ENCODE measurements at regions of chr10 and their contacts with region 1.

Region 1: DNA sequence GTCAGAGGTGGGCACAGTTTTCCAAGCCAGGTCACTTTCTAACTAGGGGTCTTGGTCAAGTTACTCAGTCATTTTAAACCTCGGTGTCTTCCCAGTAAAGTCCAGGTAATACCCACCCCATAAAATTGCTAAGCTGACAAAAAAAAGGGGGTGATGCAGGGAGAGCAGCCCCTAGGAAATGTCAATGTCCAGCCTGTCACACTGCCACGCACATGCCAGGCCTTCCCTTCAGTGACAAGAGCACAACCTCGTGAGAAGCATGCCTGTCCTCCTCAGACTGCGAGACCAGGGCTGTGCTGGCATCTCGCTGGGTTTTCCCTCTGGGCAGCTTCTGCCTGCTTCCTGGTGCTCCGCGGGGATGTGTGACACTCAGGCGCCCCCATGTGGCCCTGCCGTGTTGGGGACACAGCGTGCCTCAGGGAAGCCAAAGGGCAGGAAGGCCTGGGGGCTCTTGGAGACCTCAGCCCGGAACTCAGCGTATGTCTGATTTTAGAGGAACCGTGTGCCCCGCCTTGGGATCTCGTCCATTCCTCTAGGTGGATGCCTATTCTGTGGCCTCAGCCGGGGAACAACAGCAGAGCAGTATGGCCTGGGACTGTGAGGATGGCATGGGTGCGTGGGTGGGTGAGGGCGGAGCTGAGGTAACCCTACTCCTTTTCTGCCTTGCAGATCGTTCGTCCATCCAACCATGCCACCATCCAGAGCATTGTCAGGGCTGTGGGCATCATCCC is 10.2 kb upstream of the GDF2 start:
- DNase-seq: peak; percentile 91
- H3K4me3 Mint-ChIP-seq: no peak overlapping the region
- H3K27ac Mint-ChIP-seq: peak overlapping the region; percentile 51
- H3K4me1 Mint-ChIP-seq: peaks cover 22% of the 10 kb centered on the region
- H3K27me3 Mint-ChIP-seq: no peaks in the 10 kb centered on the region

Region 2: GRCh38 chr10:47040041-47040491 is 272.0 kb before region 1 on chr10:
- CTCF ChIA-PET with region 1: interaction called, 369 read pairs
- POLR2A ChIA-PET with region 1: no interaction called
- intact Hi-C with region 1: no loop called
- DNase-seq: no peak
- H3K4me3 Mint-ChIP-seq: no peak overlapping the region
- H3K27ac Mint-ChIP-seq: no peak overlapping the region
- H3K4me1 Mint-ChIP-seq: no peaks in the 10 kb centered on the region
- H3K27me3 Mint-ChIP-seq: no peaks in the 10 kb centered on the region

Region 3: GRCh38 chr10:47165711-47166524 is 146.2 kb before region 1 on chr10:
- CTCF ChIA-PET with region 1: interaction called, 4 read pairs
- POLR2A ChIA-PET with region 1: no interaction called
- intact Hi-C with region 1: loop called (anchors 5 kb)
- DNase-seq: peak; percentile 58
- H3K4me3 Mint-ChIP-seq: peak overlapping the region; percentile 67
- H3K27ac Mint-ChIP-seq: peak overlapping the region; percentile 78
- H3K4me1 Mint-ChIP-seq: peaks cover 27% of the 10 kb centered on the region
- H3K27me3 Mint-ChIP-seq: no peaks in the 10 kb centered on the region

Measured in activated CD4-positive, alpha-beta memory T cell treated with anti-CD3 and anti-CD28 coated beads for 36 hours (primary cell).